ENCODE measurements at regions of chr14 and their contacts with region 1.

Region 1: DNA sequence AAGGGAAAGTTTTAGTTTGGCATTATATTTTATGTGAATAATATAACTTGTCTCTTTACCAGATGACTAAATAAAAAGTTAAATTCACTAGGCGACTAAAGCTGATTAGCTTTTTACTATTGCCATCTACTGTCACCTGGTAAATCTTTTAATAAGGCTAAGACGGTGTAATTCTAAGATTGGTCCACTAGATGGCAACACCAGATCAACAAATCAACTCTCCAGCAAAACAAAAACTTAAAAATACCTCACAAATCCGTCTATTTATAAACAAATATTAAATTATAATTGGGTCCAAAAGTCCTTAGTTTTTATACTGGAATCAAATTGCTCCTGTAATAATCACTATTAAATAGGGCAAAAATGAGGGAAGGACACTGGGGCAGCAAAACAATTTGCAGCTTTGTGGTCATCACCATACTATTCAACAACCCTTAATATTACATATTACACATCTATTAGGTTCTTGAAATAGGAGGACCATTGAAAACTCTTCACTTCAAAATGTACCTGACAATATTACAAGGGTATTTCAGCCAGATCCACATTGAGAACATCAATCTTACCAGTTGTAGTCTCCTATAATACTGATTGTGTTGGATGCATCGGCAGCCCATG is 47.9 kb downstream of the GALC start:
- DNase-seq: peak; percentile 34
- H3K4me3 ChIP-seq: no peak overlapping the region
- H3K27ac ChIP-seq: no peak overlapping the region
- H3K27me3 ChIP-seq: no peaks in the 10 kb centered on the region
- CTCF ChIP-seq: peak; percentile 67

Region 2: GRCh38 chr14:87955501-87955900 is 10.4 kb after region 1 on chr14:
- CTCF ChIA-PET with region 1: interaction called, 16 read pairs
- POLR2A ChIA-PET with region 1: no interaction called
- DNase-seq: no peak
- H3K4me3 ChIP-seq: no peak overlapping the region
- H3K27ac ChIP-seq: no peak overlapping the region
- H3K27me3 ChIP-seq: no peaks in the 10 kb centered on the region
- CTCF ChIP-seq: no peak

Region 3: DNA sequence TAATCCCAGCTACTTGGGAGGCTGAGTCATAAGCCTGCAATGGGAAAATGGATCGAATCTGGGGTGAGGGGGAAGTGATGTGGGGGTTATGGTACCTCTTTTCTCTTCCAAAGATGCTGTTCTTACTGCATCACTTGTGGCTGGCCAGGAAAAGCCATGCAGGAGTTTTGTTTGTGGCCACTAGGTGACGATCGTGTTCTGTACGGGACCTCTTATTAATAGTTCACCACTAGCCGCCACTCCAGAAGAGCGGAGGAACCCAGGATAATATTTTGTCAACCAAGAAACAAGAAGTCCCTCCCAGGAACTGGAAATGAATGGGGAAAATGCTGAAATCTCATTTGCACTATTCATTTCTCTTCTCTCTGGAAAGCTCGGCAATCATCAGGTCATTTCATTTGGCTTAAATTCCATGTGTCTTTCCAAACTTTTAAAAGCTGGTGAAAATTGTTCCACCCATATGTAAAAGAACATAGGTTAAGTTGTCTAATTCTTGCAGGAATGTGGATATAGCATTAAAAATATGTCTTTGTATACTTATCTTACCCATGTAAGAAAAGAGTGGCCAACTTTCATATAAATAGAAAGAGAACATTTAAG is 68.8 kb after region 1 on chr14:
- CTCF ChIA-PET with region 1: interaction called, 20 read pairs
- POLR2A ChIA-PET with region 1: no interaction called
- DNase-seq: peak; percentile 8
- H3K4me3 ChIP-seq: no peak overlapping the region
- H3K27ac ChIP-seq: no peak overlapping the region
- H3K27me3 ChIP-seq: no peaks in the 10 kb centered on the region
- CTCF ChIP-seq: peak; percentile 91

Region 4: GRCh38 chr14:88189417-88190191 is 244.5 kb after region 1 on chr14:
- CTCF ChIA-PET with region 1: interaction called, 19 read pairs
- POLR2A ChIA-PET with region 1: no interaction called
- DNase-seq: peak; percentile 65
- H3K4me3 ChIP-seq: peak overlapping the region; percentile 31
- H3K27ac ChIP-seq: no peak overlapping the region
- H3K27me3 ChIP-seq: no peaks in the 10 kb centered on the region
- CTCF ChIP-seq: peak; percentile 81

Region 5: DNA sequence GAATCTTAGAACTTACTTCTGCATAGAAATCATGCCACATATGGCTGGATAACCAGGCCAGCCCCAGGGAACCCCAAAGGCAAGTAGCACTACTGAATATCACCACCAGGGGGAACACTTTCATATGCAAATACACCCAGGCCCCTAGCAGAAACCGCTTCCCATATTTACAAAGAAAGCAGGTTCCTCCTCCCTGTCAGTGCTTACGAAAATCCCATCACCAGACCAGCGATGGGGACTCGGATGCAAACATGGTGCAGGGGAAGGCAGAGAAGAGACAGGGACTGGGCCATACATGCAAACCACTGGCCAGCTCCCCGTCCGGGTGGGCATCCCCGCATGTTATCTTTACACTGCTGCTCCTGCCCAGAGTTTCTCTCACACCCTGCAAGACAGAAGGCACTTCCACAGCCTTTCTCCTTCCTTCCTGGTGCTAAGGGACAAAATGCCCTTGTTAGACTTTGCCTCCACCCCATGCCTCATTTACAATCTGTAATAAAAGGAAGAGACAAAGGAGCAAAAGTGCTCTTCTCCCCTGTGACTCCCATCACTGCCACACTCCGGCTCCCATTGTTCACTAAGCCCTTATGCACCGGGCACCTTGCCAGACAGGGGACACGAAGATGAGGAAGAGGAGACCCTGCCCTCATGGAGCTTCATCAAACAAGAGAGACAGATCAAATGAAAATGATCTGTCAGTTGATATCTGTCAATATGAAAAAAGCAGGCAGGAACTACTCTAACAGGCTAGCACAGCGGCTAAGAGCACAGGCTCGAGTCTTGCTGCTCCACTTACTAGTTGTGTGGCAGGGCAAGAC is 547.4 kb after region 1 on chr14:
- CTCF ChIA-PET with region 1: interaction called, 12 read pairs
- POLR2A ChIA-PET with region 1: no interaction called
- DNase-seq: peak; percentile 58
- H3K4me3 ChIP-seq: no peak overlapping the region
- H3K27ac ChIP-seq: no peak overlapping the region
- H3K27me3 ChIP-seq: no peaks in the 10 kb centered on the region
- CTCF ChIP-seq: peak; percentile 90

Measured in AG04450 (cell line).